Esophagus squamous epithelium (tissue), 5 donors: ENCODE measurements at regions of chr1 and their contacts with region 1.

Region 1: GRCh38 chr1:245045087-245045881 is 109.5 kb upstream of the KIF26B start:
- DNase-seq: no peak
- H3K4me3 ChIP-seq: peak overlapping the region in 1 of 4 donors; percentile 29
- H3K27ac ChIP-seq: no peak overlapping the region
- H3K4me1 ChIP-seq: peaks cover 0 to 16% (median 0%) of the 10 kb centered on the region in 3 donors
- H3K27me3 ChIP-seq: no peaks in the 10 kb centered on the region
- CTCF ChIP-seq: no peak
- POLR2A ChIP-seq: no peak

Region 2: DNA sequence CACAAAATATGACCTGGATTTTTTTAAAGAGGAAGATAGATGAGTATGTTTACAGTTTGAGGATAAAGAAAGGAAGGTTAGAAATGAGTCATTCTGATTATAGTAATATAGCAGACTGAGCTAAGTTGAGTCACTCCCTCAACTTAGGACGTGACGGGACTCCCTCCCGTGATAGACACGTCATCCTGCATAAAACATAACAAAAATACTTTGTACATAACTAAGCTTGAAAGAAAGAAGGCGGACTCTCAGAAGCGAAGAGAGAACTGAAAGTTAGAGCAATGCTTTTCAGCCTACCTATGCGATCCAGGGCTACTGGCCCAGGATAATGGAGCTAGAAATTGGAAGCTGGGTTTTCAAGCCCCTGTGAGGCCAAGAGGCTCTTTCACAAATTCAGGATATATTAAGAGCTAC is 445.3 kb before region 1 on chr1:
- intact Hi-C with region 1: loop called (anchors 10 kb)
- DNase-seq: no peak
- H3K4me3 ChIP-seq: peak overlapping the region in 3 of 4 donors; percentile 14 to 37 (median 29)
- H3K27ac ChIP-seq: peak overlapping the region in 3 of 4 donors; percentile 53 to 75 (median 63)
- H3K4me1 ChIP-seq: peaks cover 0 to 10% (median 0%) of the 10 kb centered on the region in 3 donors
- H3K27me3 ChIP-seq: no peaks in the 10 kb centered on the region
- CTCF ChIP-seq: no peak
- POLR2A ChIP-seq: no peak

Region 3: GRCh38 chr1:244796718-244797406 is 248.4 kb before region 1 on chr1:
- intact Hi-C with region 1: loop called (anchors 5 kb)
- DNase-seq: no peak
- H3K4me3 ChIP-seq: no peak overlapping the region
- H3K27ac ChIP-seq: no peak overlapping the region
- H3K4me1 ChIP-seq: no peaks in the 10 kb centered on the region
- H3K27me3 ChIP-seq: no peaks in the 10 kb centered on the region
- CTCF ChIP-seq: peak; percentile 75 to 92 (median 86)
- POLR2A ChIP-seq: no peak

Region 4: DNA sequence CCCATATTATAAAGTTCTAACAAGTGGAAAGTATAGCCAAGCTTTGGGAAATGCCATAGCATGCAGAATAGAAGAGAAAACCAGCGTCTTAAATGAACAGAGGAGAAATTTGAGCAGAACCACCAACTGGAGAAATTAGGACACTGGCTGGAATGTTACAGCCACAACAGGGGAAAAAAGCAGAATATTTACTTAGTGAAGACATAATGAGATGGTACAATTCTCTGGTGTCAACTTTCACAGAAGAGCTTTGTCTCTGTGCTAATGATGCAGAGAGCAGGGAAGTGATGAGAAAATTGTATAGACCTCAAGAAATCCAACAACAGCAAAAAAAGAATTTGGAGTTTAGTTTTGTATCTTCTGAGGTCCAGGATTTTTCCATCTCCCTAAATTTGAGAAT is 359.2 kb after region 1 on chr1:
- intact Hi-C with region 1: no loop called
- DNase-seq: no peak
- H3K4me3 ChIP-seq: no peak overlapping the region
- H3K27ac ChIP-seq: no peak overlapping the region
- H3K4me1 ChIP-seq: no peaks in the 10 kb centered on the region
- H3K27me3 ChIP-seq: no peaks in the 10 kb centered on the region
- CTCF ChIP-seq: no peak
- POLR2A ChIP-seq: no peak